Activated CD4-positive, alpha-beta T cell treated with anti-CD3 and anti-CD28 coated beads for 36 hours (primary cell): ENCODE measurements at regions of chr6 and their contacts with region 1.

Region 1: GRCh38 chr6:2931970-2932748 is 29.1 kb upstream of the SERPINB9 start:
- DNase-seq: peak; percentile 92
- ATAC-seq: peak; percentile 88
- H3K4me3 Mint-ChIP-seq: no peak overlapping the region
- H3K27ac Mint-ChIP-seq: peak overlapping the region; percentile 67
- H3K4me1 Mint-ChIP-seq: peaks cover 30% of the 10 kb centered on the region
- H3K27me3 Mint-ChIP-seq: no peaks in the 10 kb centered on the region

Region 2: DNA sequence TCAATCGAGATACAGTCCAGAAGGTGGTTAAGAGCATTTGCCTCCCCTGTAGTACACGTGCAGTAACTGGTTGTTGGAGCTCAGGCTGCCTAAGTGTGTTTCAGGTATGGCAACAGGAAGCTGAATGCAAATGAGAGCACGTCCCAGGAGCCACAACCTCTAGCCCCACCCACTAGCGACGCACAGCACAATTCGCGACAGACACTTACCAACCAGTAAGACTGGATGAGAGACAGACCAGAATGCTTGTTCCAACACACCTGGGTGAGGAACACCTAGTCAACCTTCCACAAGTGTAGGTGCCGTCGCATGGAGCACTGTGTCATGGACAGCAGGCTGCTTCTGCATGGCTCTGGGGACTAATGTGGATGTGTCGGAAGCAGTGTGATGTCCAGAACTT is 83.3 kb before region 1 on chr6:
- CTCF ChIA-PET with region 1: interaction called, 165 read pairs
- POLR2A ChIA-PET with region 1: interaction called, 13 read pairs
- intact Hi-C with region 1: loop called (anchors 1 kb)
- DNase-seq: peak; percentile 86
- ATAC-seq: peak; percentile 69
- H3K4me3 Mint-ChIP-seq: peak overlapping the region; percentile 58
- H3K27ac Mint-ChIP-seq: peak overlapping the region; percentile 88
- H3K4me1 Mint-ChIP-seq: peaks cover 59% of the 10 kb centered on the region
- H3K27me3 Mint-ChIP-seq: no peaks in the 10 kb centered on the region

Region 3: DNA sequence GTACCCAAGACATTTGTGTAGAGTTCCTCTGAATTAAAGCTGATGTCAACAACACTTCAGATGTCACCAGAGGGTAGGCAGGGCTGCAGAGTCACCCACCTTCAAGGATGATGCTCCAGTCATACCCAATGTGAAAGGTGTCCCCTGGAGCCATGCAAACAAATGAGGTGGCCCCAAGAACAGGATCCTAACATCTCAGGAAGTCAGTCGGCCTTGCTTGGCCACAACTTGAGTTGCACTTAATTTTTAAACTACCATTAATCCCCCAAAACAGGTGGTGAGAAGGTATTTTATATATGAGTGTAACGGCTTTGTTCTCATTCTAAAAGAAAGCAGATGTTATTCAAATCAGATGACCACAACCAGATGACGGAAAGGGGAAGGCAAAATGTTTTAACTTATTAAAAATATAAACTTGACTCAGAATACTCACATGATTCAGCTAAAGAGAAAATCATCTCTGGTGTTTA is 69.4 kb before region 1 on chr6:
- CTCF ChIA-PET with region 1: interaction called, 8 read pairs
- POLR2A ChIA-PET with region 1: interaction called, 35 read pairs
- intact Hi-C with region 1: no loop called
- DNase-seq: peak; percentile 77
- ATAC-seq: peak; percentile 54
- H3K4me3 Mint-ChIP-seq: peak overlapping the region; percentile 66
- H3K27ac Mint-ChIP-seq: peak overlapping the region; percentile 99
- H3K4me1 Mint-ChIP-seq: peaks cover 80% of the 10 kb centered on the region
- H3K27me3 Mint-ChIP-seq: no peaks in the 10 kb centered on the region

Region 4: DNA sequence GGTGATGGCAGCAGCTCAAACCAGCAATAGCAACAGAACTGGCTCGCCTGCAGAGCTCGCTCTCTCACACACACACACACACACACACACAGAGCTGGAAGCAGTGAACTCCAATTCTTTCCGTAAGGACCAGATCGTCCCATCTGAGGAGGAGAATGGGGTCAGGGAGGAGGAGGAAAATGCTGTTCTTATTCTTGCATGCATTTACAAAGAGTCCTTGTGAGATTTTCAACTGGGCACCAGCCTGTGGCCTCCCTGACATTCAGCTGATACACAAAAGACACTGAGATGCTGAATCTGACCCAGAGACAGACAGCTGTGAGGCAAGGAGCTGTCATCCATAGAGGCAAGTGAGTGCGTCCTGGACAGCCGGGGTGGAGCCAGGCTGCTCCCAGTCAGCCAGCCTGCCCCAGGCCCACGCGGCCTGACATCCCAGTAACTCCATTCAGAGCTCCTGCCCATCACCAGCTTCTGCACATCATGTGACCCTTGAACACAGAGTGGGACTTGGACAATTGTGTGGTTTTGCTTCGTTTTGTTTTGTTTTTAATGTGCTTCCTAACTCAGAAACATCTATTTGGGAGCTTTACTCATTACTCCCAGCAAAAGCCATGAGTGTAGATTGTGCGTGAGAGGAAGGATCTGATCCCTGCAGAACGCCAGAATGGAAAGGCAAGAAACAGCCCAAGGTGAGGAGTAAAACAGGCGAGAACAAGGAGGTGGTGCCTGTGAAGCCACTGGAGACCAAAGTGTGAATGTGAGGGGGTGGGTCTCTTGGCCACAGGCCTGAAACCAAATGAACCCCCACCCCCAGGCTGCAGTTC is 31.1 kb before region 1 on chr6:
- CTCF ChIA-PET with region 1: interaction called, 5 read pairs
- POLR2A ChIA-PET with region 1: interaction called, 14 read pairs
- intact Hi-C with region 1: loop called (anchors 1 to 2 kb)
- DNase-seq: peak; percentile 26
- ATAC-seq: no peak
- H3K4me3 Mint-ChIP-seq: peak overlapping the region; percentile 91
- H3K27ac Mint-ChIP-seq: peak overlapping the region; percentile 93
- H3K4me1 Mint-ChIP-seq: peaks cover 45% of the 10 kb centered on the region
- H3K27me3 Mint-ChIP-seq: no peaks in the 10 kb centered on the region

Region 5: GRCh38 chr6:2952557-2953095 is 20.5 kb after region 1 on chr6:
- CTCF ChIA-PET with region 1: interaction called, 11 read pairs
- POLR2A ChIA-PET with region 1: interaction called, 7 read pairs
- intact Hi-C with region 1: no loop called
- DNase-seq: peak; percentile 80
- ATAC-seq: peak; percentile 97
- H3K4me3 Mint-ChIP-seq: peak overlapping the region; percentile 46
- H3K27ac Mint-ChIP-seq: peak overlapping the region; percentile 74
- H3K4me1 Mint-ChIP-seq: peaks cover 15% of the 10 kb centered on the region
- H3K27me3 Mint-ChIP-seq: no peaks in the 10 kb centered on the region

Region 6: GRCh38 chr6:3427687-3428085 is 495.5 kb after region 1 on chr6:
- CTCF ChIA-PET with region 1: no interaction called
- POLR2A ChIA-PET with region 1: no interaction called
- intact Hi-C with region 1: no loop called
- DNase-seq: no peak
- ATAC-seq: no peak
- H3K4me3 Mint-ChIP-seq: no peak overlapping the region
- H3K27ac Mint-ChIP-seq: no peak overlapping the region
- H3K4me1 Mint-ChIP-seq: no peaks in the 10 kb centered on the region
- H3K27me3 Mint-ChIP-seq: no peaks in the 10 kb centered on the region